Left colon (tissue), 2 donors: ENCODE measurements at regions of chr18 and their contacts with region 1.

Region 1: GRCh38 chr18:830315-830901 is 18.4 kb upstream of the YES1 start:
- DNase-seq: no peak
- ATAC-seq: no peak

Region 2: DNA sequence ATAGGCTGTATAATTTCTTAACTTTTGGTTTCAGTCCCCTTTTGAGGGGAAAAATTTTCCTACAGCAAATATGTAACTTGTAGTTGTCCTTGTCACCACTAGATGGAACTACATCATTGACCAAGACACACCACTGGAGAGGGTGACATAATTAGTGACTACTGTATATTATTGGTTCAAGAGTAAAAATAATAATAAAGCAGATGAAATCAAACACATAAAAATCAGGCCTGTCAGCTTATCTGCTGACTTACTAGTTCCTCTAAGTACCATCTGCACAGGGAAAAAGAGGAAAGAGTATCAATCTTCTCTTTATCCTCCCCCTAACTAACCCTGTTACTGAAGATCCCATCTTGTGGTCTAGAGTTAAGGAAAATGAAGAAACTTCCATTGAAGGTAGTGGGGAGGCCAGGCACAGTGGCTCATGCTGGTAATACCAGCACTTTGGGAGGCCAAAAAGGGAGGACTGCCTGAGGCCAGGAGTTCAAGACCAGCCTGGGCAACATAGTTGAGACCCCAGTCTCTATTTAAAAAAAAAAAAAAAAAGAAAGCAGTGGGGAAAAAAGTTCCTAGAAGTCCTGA is 88.4 kb before region 1 on chr18:
- intact Hi-C with region 1: loop called in 1 of 2 experiments (anchors 5 kb)
- DNase-seq: no peak
- ATAC-seq: peak; percentile 72